GM12878 (cell line): ENCODE measurements at regions of chr11 and their contacts with region 1.

Region 1: DNA sequence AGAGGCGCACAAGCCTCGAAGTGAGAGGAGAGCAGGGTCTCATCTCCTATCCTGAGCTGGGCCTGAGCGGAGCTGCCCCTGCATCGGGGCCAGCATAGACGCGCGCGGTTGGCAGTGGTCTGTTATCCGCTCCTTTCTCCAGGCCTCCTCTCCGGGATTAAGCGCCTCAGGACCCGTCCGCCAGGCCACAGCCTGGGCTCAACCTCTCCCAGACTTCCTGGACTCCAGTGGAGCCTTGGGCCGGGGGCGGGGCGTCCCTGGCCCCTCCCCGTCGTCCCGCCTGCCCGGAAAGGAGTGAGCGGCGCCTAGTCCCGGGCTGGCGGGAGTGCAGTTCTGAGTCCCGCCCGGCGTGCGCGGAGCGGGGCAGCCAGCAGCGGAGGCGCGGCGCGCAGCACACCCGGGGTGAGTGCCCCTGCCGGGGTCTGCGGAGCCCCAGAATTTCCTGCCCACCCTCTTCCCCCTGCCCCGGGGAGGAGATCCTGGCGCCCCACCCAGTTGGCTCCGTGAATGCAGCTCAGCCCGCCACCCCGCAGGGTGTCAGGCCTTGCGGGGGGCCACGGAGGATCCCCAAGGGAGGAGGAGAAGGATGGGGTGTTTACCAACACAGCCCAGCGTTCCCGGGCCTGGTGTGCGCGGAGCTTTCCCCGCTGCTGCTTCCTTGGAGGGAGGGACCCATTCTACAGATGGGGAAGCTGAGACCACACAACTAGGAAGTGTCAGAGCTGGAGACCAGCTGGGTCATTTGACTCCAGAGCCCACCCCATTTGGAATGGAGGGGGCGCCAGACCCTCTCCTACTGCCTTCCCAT is at the start of gene TCIRG1:
- DNase-seq: peak; percentile 15
- ATAC-seq: peak; percentile 78
- H3K4me3 ChIP-seq: peak within 1 kb of the TSS; percentile 99
- H3K27ac ChIP-seq: peak within 1 kb of the TSS; percentile 91
- H3K4me1 ChIP-seq: peaks cover 13% of the 10 kb centered on the region
- H3K27me3 ChIP-seq: no peaks in the 10 kb centered on the region
- CTCF ChIP-seq: no peak
- EP300 ChIP-seq: no peak
- POLR2A ChIP-seq: peak; percentile 91
- RAD21 ChIP-seq: no peak
- polyA plus RNA-seq, gene TCIRG1: 0.76 to 7.5 TPM

Region 2: DNA sequence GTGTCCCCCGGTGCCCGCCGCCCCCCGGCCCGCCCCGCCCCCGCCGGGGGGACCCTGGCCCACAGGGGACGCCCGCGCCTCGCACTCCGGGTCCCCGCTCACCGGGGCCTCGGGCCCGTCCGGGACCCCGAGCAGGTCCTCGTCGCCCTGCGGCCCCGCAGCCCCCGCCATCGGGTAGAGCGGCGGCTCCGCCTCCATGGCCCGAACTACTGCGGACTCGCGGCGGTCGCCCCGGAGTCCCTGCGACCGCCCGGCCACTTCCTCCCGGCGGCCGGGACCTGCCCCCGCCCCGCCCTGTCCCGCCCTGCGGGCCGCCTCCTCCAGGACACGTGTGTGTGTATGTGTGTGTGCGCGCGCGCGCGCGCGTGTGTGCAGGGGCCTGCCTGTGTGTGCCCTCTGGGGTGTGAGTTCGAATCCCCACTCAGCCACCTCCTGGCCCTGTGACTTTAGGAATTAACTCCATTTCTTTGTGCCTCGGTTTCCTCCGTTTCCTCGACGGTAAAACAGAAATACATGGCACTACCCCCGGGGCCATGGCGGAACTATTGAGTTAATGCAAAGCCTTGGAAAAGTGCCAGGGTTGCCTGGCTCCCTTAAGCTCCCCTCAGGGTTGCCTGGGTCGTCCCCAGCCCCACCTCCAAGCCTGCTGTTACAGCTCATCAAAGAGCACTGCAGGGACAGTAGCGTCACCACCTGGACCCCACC is 34.9 kb before region 1 on chr11 and contains the start of gene UNC93B1:
- CTCF ChIA-PET with region 1: interaction called, 5 read pairs
- POLR2A ChIA-PET with region 1: interaction called, 11 read pairs
- RAD21 ChIA-PET with region 1: interaction called, 4 read pairs
- SMC1A ChIA-PET with region 1: interaction called, 3 read pairs
- in situ Hi-C with region 1: no loop called
- intact Hi-C with region 1: loop called (anchors 5 kb)
- DNase-seq: peak; percentile 57
- ATAC-seq: peak; percentile 88
- H3K4me3 ChIP-seq: peak within 1 kb of the TSS; percentile 92
- H3K27ac ChIP-seq: peak within 1 kb of the TSS; percentile 78
- H3K4me1 ChIP-seq: peaks cover 36% of the 10 kb centered on the region
- H3K27me3 ChIP-seq: no peaks in the 10 kb centered on the region
- CTCF ChIP-seq: no peak
- EP300 ChIP-seq: no peak
- POLR2A ChIP-seq: peak; percentile 87
- RAD21 ChIP-seq: no peak
- polyA plus RNA-seq, gene UNC93B1: 1.3 to 3.4 TPM